ENCODE measurements at regions of chr17 and their contacts with region 1.

Region 1: DNA sequence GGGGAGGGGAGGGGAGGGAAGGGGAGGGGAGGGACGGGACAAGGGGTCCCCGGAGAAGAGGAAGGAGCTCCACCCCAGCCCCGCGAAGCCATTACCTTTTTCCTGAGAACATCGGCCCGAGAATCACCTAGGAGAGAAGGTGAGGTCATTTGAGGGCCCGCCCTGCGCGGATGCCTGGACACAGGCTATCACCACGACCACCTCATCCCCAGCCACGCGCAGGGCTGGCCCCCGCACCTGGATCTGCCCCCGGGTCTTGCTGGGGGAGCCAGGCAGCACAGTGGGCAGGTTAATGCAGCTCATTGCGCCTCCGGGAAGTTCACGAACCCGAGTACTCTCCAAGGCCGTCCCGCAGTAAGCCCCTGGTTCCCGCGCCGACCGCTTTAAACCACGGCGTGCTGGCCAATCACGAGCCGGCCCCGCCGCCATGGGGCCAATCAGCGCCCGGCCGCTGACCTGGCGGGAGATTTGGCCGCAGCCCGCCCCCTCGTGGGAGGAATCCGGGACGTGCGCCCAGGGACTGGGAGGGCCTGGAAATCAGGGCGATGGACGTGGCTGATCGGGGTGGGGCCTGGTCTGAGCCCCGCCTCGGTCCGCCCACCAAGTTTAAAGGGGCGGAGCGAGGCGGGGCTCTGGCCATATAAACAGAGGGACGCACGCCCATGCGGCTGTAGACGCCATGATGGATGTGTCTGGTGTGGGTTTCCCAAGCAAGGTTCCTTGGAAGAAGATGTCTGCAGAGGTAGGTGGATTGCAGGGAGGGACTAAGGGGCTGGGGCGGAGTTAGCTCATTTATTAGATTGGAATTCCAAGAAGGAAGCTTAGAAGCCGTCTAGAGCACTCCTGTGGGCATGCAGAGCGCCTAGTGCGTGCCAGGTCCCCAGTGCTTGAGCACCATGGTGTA is at the starts of genes AFMID and TK1:
- DNase-seq: peak; percentile 100

Region 2: GRCh38 chr17:78128551-78129350 is 58.2 kb before region 1 on chr17 and contains the start of gene TMC6:
- CTCF ChIA-PET with region 1: interaction called, 3 read pairs
- POLR2A ChIA-PET with region 1: interaction called, 18 read pairs
- DNase-seq: peak; percentile 85

Region 3: DNA sequence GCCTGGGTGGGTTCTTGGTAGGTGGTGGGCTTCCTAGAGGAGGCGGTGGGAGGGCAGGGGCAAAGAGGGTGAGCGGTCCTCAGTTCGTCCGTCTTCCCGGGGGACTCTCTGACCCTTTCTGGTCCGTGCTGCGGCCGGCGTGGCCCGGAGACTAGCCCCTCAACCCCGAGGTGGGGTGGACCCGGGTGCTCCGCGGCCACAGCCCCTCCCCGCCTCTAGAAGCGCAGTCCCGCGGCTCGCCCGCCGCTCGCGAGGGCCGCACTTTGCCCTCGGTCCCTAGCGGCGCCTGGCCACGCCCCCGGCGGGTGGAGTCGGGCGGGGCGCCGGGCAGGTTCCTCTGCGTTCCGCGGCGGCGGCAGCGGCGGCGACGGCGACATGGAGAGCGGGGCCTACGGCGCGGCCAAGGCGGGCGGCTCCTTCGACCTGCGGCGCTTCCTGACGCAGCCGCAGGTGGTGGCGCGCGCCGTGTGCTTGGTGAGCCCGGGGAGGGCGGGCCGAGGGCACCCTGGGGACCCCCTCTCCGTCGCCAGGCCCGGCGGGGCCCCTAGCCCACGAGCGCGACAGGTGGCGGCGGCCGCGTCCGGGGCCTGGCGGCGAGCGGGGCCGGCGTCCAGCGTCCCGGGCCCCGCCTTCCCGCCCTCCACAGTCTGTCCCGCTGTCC is 18.6 kb before region 1 on chr17 and contains the start of gene SYNGR2:
- CTCF ChIA-PET with region 1: no interaction called
- POLR2A ChIA-PET with region 1: interaction called, 31 read pairs
- DNase-seq: peak; percentile 97

Region 4: DNA sequence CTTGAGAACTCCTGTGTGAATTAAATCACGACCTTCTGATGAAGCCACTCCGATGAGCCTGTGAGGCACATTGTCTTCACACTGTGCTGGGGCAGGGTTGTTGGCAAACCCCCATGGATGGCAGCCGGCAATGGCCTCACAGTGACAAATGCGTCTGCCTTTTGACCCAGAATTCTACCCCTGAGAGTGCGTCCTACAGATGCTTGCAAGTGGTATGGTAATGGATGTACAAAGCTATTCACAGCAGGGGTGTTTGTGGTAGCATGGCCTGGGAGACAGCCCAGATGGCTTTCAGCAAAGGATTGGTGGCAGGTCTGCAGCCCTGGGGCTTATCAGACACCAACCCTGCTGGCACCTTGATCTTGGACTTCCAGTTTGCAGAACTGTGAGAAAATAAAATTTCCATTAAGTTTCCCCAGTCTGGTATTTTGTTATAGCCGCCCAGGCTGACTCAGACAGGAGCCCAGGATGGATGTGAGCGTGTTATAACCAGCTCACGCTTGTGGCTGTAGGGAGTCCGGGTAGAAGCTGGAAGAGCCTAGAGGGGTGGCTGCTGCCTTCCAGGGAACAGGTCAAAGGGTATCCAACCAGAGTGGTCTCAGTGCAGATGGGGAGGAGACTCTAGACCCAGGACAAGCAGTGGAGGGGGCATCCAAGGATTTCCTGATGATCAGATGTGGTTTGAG is 10.3 kb after region 1 on chr17:
- CTCF ChIA-PET with region 1: no interaction called
- POLR2A ChIA-PET with region 1: interaction called, 50 read pairs
- DNase-seq: no peak

Region 5: GRCh38 chr17:78226749-78227399 is 39.9 kb after region 1 on chr17:
- CTCF ChIA-PET with region 1: no interaction called
- POLR2A ChIA-PET with region 1: interaction called, 15 read pairs
- DNase-seq: no peak

Region 6: GRCh38 chr17:78263063-78263743 is 76.3 kb after region 1 on chr17:
- CTCF ChIA-PET with region 1: no interaction called
- POLR2A ChIA-PET with region 1: no interaction called
- DNase-seq: no peak

Region 7: GRCh38 chr17:78401246-78401645 is 214.3 kb after region 1 on chr17:
- CTCF ChIA-PET with region 1: no interaction called
- POLR2A ChIA-PET with region 1: no interaction called
- DNase-seq: no peak

Measured in HEK293T (cell line).